SK-N-SH (cell line): ENCODE measurements at regions of chr17 and their contacts with region 1.

Region 1: DNA sequence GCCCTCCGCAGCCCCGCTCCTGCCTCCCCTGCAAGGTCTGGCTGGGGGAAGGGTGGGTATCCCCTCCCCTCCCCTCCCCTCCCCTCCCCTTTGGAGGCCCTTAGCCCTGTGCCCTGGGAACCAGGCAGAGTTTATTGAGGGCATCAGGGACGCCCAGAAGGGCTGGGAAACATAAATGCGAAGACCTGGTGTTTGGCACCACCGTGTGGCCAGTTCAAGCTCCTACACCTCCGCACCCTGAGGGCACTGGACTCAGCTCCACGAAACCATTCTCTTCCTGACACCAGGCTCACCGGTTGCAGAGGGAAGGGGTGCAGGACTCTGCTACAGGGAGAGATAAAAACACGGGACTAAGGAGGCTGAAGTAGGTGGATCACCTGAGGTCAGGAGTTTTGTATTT is 1.0 kb upstream of the AIPL1 start:
- DNase-seq: peak; percentile 84
- H3K4me3 ChIP-seq: no peak overlapping the region; a peak in 1 of 4 replicates
- H3K27ac ChIP-seq: no peak overlapping the region
- H3K4me1 ChIP-seq: no peaks in the 10 kb centered on the region
- H3K27me3 ChIP-seq: peaks cover 15% of the 10 kb centered on the region; the same call in 1 of the 2 replicates
- CTCF ChIP-seq: peak; percentile 74
- EP300 ChIP-seq: no peak
- RAD21 ChIP-seq: peak; percentile 82

Region 2: DNA sequence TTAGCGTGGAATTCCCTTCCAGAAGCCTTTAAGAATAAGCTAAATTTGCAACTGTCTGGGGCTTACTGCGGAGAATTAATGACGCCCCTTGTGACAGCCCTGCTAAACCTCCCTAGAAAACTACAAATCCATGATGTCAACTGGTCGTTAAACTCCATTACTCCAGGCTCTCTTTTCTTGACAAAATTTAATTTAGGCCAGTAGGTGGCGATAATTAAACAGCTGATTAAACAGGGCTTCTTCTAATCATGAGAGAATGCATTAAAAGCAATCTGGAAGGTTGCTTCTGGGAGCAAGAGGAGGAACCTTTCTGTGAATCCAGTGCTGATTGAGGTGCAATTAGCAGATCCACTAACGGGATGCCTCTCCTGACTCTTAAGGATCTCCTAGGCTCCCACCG is 843.6 kb before region 1 on chr17:
- CTCF ChIA-PET with region 1: interaction called, 19 read pairs
- POLR2A ChIA-PET with region 1: no interaction called
- DNase-seq: peak; percentile 24
- H3K4me3 ChIP-seq: peak overlapping the region in 1 of 2 experiments; percentile 14; a peak in 1 of 4 replicates
- H3K27ac ChIP-seq: no peak overlapping the region
- H3K4me1 ChIP-seq: no peaks in the 10 kb centered on the region
- H3K27me3 ChIP-seq: no peaks in the 10 kb centered on the region; the same call in 1 of the 2 replicates
- CTCF ChIP-seq: peak; percentile 70
- EP300 ChIP-seq: no peak
- RAD21 ChIP-seq: peak; percentile 58

Region 3: DNA sequence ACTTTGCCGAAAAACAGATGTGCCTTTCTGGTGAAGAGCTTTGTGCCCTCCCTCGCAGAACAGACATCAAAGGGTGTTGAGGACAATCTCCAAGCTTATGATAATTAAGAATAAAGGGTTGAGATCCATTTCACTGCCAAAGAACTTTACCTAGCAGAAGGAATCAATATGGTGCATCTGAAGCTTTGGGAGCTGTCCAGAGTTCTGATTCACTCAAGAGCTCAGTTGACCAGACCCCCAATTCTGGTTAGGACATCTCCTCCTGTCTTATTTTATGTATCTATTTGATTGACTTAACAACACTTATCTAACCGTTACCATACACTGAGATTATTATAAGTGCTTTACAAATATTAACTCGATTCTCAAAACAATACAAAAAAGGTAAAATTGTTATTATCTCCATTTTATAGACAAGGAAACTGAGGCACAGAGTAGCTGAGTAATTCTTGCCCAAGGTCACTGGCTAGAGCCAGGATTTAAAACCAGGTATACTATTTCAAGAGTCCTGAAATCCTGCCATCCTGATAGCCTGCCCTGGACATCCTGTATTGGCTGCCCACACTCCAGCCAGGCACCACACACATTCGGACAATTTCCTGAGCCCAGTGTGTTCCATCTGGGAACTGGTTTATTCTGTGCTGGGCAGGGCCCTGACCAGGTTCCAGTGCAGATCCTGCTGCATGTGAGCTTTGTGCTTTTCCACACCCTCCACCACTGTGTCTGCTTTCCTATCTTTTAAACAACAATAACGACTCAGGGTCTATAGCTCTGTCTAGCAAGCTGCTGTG is 90.6 kb after region 1 on chr17:
- CTCF ChIA-PET with region 1: no interaction called
- POLR2A ChIA-PET with region 1: no interaction called
- DNase-seq: no peak
- H3K4me3 ChIP-seq: no peak overlapping the region
- H3K27ac ChIP-seq: no peak overlapping the region
- H3K4me1 ChIP-seq: no peaks in the 10 kb centered on the region
- H3K27me3 ChIP-seq: no peaks in the 10 kb centered on the region
- CTCF ChIP-seq: no peak
- EP300 ChIP-seq: no peak
- RAD21 ChIP-seq: no peak

Region 4: DNA sequence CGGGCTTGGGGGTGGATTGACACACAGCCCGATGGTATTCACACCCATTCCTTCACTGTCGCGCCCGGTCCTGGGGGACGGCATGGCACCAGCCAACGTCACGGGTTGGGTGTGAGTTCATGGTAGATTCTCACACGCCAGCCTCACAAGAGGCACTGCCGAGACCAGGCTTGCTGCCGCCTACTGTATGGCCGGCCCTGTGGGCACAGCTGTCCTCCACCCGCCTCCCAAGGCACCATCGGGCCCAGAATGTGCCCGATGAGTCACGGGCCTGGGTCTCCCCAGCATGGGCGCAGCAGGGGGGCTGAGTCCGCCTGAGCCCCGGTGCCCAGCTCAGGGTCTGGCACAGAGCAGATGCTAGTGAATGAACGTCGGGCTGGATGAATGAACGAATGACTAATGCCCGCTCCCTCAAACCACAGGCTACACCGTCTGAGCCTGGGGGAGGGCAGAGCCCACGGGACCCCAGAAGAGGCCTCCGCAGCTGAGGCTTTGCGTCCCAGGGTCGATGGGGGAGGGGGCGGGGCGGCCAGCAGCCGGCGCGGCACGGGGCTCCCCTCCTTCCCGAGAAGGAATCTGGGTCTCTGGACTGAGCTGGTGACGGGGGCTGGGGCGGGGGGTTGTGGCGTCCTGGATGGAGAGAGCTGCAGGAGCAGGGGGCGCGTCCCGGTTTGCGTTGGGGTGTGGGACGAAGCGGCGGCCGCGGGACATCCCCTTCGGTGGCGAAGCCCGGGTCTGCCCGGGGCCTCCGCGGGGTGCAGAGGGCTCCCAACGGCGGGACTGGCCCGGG is 119.6 kb after region 1 on chr17:
- CTCF ChIA-PET with region 1: no interaction called
- POLR2A ChIA-PET with region 1: no interaction called
- DNase-seq: peak; percentile 60
- H3K4me3 ChIP-seq: peak overlapping the region; percentile 40 to 59
- H3K27ac ChIP-seq: no peak overlapping the region
- H3K4me1 ChIP-seq: peaks cover 0 to 9% of the 10 kb centered on the region in 2 experiments; a peak in 1 of 4 replicates
- H3K27me3 ChIP-seq: no peaks in the 10 kb centered on the region
- CTCF ChIP-seq: no peak
- EP300 ChIP-seq: no peak
- RAD21 ChIP-seq: no peak